ENCODE measurements at regions of chr5 and their contacts with region 1.

Region 1: DNA sequence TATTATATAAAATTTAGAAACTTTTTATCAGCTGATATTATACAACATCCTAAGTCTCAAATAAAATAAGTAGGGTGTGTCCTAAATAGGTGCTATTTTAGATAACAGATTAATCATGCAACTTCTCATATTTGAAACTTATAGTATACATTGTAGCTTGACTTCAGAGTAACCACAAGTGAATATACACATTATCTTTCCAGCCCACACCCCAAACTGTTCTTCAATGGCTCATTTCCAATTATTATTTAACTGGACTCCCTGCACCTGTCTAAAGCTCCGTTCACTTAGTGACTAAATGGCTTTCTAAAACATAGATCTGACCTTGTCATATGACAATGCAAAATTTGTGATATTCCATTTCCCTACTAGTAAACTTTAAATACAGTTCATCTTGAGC is 490.9 kb upstream of the RGMB start:
- DNase-seq: no peak
- ATAC-seq: no peak
- H3K4me3 ChIP-seq: no peak overlapping the region
- H3K27ac ChIP-seq: no peak overlapping the region
- H3K4me1 ChIP-seq: no peaks in the 10 kb centered on the region
- H3K27me3 ChIP-seq: no peaks in the 10 kb centered on the region
- CTCF ChIP-seq: no peak

Region 2: DNA sequence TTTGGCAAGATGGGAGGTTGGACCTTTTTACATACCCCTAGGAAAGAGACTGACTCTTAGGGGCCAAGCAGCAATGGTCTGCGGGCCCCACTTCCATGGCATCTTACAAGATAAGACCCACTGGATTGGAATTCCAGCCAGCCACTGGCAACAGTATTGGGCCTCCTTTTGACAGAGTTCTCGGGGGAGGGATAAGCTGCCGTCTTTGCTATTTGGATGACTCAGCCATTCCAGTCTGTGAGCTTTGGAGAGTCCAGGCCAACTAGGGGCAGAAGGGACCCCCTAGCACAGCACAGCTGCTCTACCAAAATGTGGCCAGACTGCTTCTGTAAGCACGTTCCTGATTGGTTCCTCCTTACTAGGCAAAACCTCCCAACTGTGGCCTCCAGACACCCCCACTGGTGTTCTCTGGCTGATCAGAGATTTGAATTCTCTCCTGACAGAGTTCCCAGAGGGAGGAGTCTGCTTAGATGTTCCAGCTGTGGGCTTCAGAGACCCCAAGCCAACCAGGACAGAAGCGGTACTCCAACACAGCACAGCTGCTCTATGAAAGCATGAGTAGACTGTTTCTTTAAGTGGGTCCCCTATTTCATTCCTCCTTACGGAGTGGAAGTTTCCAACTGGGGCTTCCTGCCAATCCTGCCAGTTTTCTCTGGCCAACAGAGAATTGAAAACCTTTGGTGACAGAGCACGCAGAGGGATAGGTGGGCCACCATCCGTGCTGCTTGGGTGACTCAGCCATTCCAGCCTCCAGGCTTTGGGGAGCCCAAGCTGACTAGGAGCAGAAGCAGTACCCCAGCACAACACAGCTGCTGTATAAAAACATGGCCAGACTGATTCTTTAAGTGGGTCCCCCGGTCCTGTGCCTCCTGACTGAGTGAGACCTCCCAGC is 427.4 kb before region 1 on chr5:
- CTCF ChIA-PET with region 1: no interaction called
- POLR2A ChIA-PET with region 1: no interaction called
- in situ Hi-C with region 1: no loop called
- intact Hi-C with region 1: no loop called
- DNase-seq: no peak
- ATAC-seq: no peak
- H3K4me3 ChIP-seq: no peak overlapping the region
- H3K27ac ChIP-seq: no peak overlapping the region
- H3K4me1 ChIP-seq: no peaks in the 10 kb centered on the region
- H3K27me3 ChIP-seq: no peaks in the 10 kb centered on the region
- CTCF ChIP-seq: no peak

Region 3: DNA sequence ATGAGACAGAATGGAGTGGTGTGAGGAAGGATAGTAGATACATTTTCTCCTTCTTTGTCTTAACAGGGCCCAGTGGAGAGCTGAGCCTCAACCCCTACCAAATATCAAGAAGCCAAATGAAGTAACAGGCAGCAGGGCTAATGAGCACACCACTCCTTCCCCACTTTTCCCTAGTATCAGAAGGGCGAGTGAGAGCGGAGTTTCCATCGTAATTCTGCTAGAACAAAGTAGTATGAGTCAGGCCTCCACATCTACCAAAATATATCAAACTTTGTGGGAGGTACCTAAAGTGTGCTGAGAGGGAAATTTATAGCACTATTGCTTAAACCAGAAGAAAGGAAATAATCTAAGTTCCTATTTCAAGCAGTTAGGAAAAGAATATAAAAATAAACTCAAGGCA is 278.1 kb before region 1 on chr5:
- CTCF ChIA-PET with region 1: no interaction called
- POLR2A ChIA-PET with region 1: no interaction called
- in situ Hi-C with region 1: no loop called
- intact Hi-C with region 1: no loop called
- DNase-seq: no peak
- ATAC-seq: no peak
- H3K4me3 ChIP-seq: no peak overlapping the region
- H3K27ac ChIP-seq: no peak overlapping the region
- H3K4me1 ChIP-seq: no peaks in the 10 kb centered on the region
- H3K27me3 ChIP-seq: no peaks in the 10 kb centered on the region
- CTCF ChIP-seq: no peak

Region 4: GRCh38 chr5:98268162-98268860 is 14.2 kb before region 1 on chr5:
- CTCF ChIA-PET with region 1: no interaction called
- POLR2A ChIA-PET with region 1: no interaction called
- in situ Hi-C with region 1: no loop called
- intact Hi-C with region 1: no loop called
- DNase-seq: no peak
- ATAC-seq: no peak
- H3K4me3 ChIP-seq: no peak overlapping the region
- H3K27ac ChIP-seq: no peak overlapping the region
- H3K4me1 ChIP-seq: no peaks in the 10 kb centered on the region
- H3K27me3 ChIP-seq: no peaks in the 10 kb centered on the region
- CTCF ChIP-seq: no peak

Region 5: GRCh38 chr5:98365126-98365525 is 82.6 kb after region 1 on chr5:
- CTCF ChIA-PET with region 1: interaction called, 13 read pairs
- POLR2A ChIA-PET with region 1: no interaction called
- in situ Hi-C with region 1: no loop called
- intact Hi-C with region 1: no loop called
- DNase-seq: no peak
- ATAC-seq: no peak
- H3K4me3 ChIP-seq: no peak overlapping the region
- H3K27ac ChIP-seq: no peak overlapping the region
- H3K4me1 ChIP-seq: no peaks in the 10 kb centered on the region
- H3K27me3 ChIP-seq: no peaks in the 10 kb centered on the region
- CTCF ChIP-seq: no peak

Region 6: DNA sequence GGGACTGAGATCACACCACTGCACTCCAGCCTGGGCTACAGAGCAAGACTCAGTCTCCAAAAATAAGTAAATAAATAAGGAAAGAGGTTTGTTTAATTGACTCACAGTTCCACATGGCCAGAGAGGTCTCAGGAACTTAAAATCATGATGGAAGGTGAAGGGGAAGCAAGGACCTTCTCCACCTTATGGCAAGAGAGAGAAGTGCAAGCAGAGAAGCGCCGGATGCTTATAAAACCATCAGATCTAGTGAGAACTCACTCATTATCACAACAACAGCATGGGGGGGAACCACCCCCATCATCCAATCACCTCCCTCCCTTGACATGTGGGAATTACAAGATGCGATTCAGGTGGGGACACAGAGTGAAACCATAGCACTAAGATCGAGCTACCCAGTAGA is 468.2 kb after region 1 on chr5:
- CTCF ChIA-PET with region 1: no interaction called
- POLR2A ChIA-PET with region 1: no interaction called
- in situ Hi-C with region 1: no loop called
- intact Hi-C with region 1: no loop called
- DNase-seq: no peak
- ATAC-seq: no peak
- H3K4me3 ChIP-seq: no peak overlapping the region
- H3K27ac ChIP-seq: no peak overlapping the region
- H3K4me1 ChIP-seq: 0 out of 2 replicates have a peak, but pooled peaks cover 4% of the 10 kb centered on the region
- H3K27me3 ChIP-seq: no peaks in the 10 kb centered on the region
- CTCF ChIP-seq: peak; percentile 61